ENCODE measurements at regions of chr6 and their contacts with region 1.

Region 1: GRCh38 chr6:119349323-119350042 is at the start of gene MAN1A1:
- DNase-seq: peak; percentile 92
- H3K4me3 Mint-ChIP-seq: peak within 1 kb of the TSS; percentile 94
- H3K27ac Mint-ChIP-seq: peak within 1 kb of the TSS; percentile 93
- H3K4me1 Mint-ChIP-seq: peaks cover 43% of the 10 kb centered on the region
- H3K27me3 Mint-ChIP-seq: no peaks in the 10 kb centered on the region
- total RNA-seq, gene MAN1A1: 21.8 to 23.9 TPM

Region 2: GRCh38 chr6:117602151-117602898 is 1747.2 kb before region 1 on chr6 and contains the start of gene GOPC:
- CTCF ChIA-PET with region 1: no interaction called
- POLR2A ChIA-PET with region 1: no interaction called
- intact Hi-C with region 1: loop called (anchors 10 kb)
- DNase-seq: peak; percentile 97
- H3K4me3 Mint-ChIP-seq: peak within 1 kb of the TSS; percentile 99
- H3K27ac Mint-ChIP-seq: peak within 1 kb of the TSS; percentile 90
- H3K4me1 Mint-ChIP-seq: peaks cover 36% of the 10 kb centered on the region
- H3K27me3 Mint-ChIP-seq: peaks cover 2% of the 10 kb centered on the region
- total RNA-seq, gene GOPC: 14.8 to 15.8 TPM

Region 3: DNA sequence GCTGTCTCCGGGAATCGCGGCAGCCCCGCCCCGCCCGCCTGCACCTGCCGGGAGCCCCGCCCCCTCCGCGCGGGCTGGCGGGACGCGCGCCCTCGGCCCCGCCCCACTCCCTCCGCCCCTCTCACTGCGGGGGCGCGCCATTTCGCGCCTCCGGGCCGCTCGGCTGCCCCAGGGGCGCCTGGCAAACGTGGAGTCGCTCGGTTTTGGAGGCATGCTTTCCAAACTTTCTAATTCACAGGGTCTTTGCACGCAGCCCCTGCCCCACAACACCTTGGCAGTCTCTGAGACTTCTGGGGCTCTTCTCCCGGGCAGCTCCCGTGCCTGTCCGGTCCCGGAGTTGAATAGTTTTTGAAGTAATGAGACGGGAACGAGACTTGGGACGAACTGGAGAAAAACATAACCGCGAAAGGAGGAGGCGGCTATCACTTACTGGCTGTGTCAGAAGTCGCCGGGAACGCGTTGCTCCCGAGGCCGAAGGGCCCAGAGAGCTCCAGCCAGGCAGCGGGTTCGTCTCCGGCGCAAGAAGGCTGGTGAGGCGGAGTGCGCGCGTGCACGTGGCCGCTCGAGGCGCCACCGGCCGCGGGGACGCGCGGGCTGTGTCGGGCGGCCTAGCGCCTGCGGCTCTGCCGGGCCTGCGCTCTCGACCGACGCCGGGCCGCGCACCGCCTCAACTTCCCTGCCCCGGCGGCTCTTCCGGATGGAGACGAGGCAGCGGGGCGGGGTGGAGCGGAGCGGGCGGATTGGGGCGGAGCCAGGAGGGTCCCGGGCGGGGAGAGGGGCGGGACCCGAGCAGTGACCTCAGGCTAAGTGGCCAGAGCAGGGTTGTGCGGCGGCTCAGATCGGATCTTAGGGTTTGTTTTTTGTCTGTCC is 414.8 kb before region 1 on chr6 and contains the start of gene MCM9:
- CTCF ChIA-PET with region 1: no interaction called
- POLR2A ChIA-PET with region 1: no interaction called
- intact Hi-C with region 1: loop called (anchors 1 kb)
- DNase-seq: peak; percentile 94
- H3K4me3 Mint-ChIP-seq: peak within 1 kb of the TSS; percentile 81
- H3K27ac Mint-ChIP-seq: peak within 1 kb of the TSS; percentile 92
- H3K4me1 Mint-ChIP-seq: peaks cover 23% of the 10 kb centered on the region
- H3K27me3 Mint-ChIP-seq: no peaks in the 10 kb centered on the region
- total RNA-seq, gene MCM9: 14.4 to 14.7 TPM

Region 4: GRCh38 chr6:119147101-119148053 is 202.1 kb before region 1 on chr6:
- CTCF ChIA-PET with region 1: interaction called, 11 read pairs
- POLR2A ChIA-PET with region 1: interaction called, 8 read pairs
- intact Hi-C with region 1: loop called (anchors 1 kb)
- DNase-seq: peak; percentile 75
- H3K4me3 Mint-ChIP-seq: no peak overlapping the region
- H3K27ac Mint-ChIP-seq: peak overlapping the region; percentile 26
- H3K4me1 Mint-ChIP-seq: peaks cover 35% of the 10 kb centered on the region
- H3K27me3 Mint-ChIP-seq: peaks cover 2% of the 10 kb centered on the region

Region 5: GRCh38 chr6:119463081-119463626 is 113.7 kb after region 1 on chr6:
- CTCF ChIA-PET with region 1: interaction called, 6 read pairs
- POLR2A ChIA-PET with region 1: interaction called, 3 read pairs
- intact Hi-C with region 1: loop called (anchors 1 kb)
- DNase-seq: peak; percentile 34
- H3K4me3 Mint-ChIP-seq: no peak overlapping the region
- H3K27ac Mint-ChIP-seq: peak overlapping the region; percentile 11
- H3K4me1 Mint-ChIP-seq: peaks cover 27% of the 10 kb centered on the region
- H3K27me3 Mint-ChIP-seq: no peaks in the 10 kb centered on the region

Region 6: GRCh38 chr6:119720160-119720559 is 370.7 kb after region 1 on chr6:
- CTCF ChIA-PET with region 1: no interaction called
- POLR2A ChIA-PET with region 1: no interaction called
- intact Hi-C with region 1: no loop called
- DNase-seq: no peak
- H3K4me3 Mint-ChIP-seq: no peak overlapping the region
- H3K27ac Mint-ChIP-seq: no peak overlapping the region
- H3K4me1 Mint-ChIP-seq: peaks cover 4% of the 10 kb centered on the region
- H3K27me3 Mint-ChIP-seq: peaks cover 4% of the 10 kb centered on the region

Region 7: GRCh38 chr6:121334299-121335086 is 1985.0 kb after region 1 on chr6 and contains the start of gene TBC1D32:
- CTCF ChIA-PET with region 1: no interaction called
- POLR2A ChIA-PET with region 1: interaction called, 3 read pairs
- intact Hi-C with region 1: loop called (anchors 10 kb)
- DNase-seq: peak; percentile 92
- H3K4me3 Mint-ChIP-seq: peak within 1 kb of the TSS; percentile 92
- H3K27ac Mint-ChIP-seq: peak within 1 kb of the TSS; percentile 95
- H3K4me1 Mint-ChIP-seq: peaks cover 19% of the 10 kb centered on the region
- H3K27me3 Mint-ChIP-seq: no peaks in the 10 kb centered on the region
- total RNA-seq, gene TBC1D32: 4.6 to 6.7 TPM

Measured in activated CD4-positive, alpha-beta memory T cell treated with anti-CD3 and anti-CD28 coated beads for 36 hours (primary cell).